Endothelial cell of umbilical vein (primary cell): ENCODE measurements at regions of chr5 and their contacts with region 1.

Region 1: GRCh38 chr5:146516151-146516475 is at the start of gene GPR151:
- DNase-seq: no peak
- H3K4me3 ChIP-seq: no peak within 1 kb of the TSS
- H3K27ac ChIP-seq: no peak within 1 kb of the TSS
- H3K4me1 ChIP-seq: no peaks in the 10 kb centered on the region
- H3K27me3 ChIP-seq: peaks cover 0 to 2% of the 10 kb centered on the region in 2 experiments
- CTCF ChIP-seq: no peak
- POLR2A ChIP-seq: no peak
- total RNA-seq, gene GPR151: not detected in 2 replicates

Region 2: DNA sequence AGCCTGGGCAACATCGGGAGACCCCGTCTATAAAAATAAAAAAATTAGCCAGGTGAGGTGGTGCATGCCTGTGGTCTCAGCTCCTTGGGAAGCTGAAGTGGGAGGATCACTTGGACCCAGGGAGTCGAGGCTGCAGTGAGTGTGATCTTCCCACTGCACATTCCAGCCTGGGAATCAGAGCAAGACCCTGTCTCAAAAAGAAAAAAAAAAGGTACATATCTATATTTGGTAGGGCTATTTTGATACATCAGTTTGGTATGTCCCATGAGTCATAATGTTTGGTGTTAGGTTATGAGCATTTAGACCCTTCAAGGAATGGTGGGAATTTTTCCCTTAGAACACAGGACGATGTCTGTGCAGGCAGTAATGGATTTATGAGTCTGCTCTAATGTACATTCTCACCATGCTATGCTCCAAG is 232.8 kb before region 1 on chr5:
- CTCF ChIA-PET with region 1: no interaction called
- POLR2A ChIA-PET with region 1: no interaction called
- dilution Hi-C with region 1: no loop called
- intact Hi-C with region 1: loop called (anchors 10 kb)
- DNase-seq: peak; percentile 73
- H3K4me3 ChIP-seq: no peak overlapping the region
- H3K27ac ChIP-seq: peak overlapping the region; percentile 58
- H3K4me1 ChIP-seq: peaks cover 16% of the 10 kb centered on the region
- H3K27me3 ChIP-seq: no peaks in the 10 kb centered on the region
- CTCF ChIP-seq: no peak
- POLR2A ChIP-seq: no peak

Region 3: DNA sequence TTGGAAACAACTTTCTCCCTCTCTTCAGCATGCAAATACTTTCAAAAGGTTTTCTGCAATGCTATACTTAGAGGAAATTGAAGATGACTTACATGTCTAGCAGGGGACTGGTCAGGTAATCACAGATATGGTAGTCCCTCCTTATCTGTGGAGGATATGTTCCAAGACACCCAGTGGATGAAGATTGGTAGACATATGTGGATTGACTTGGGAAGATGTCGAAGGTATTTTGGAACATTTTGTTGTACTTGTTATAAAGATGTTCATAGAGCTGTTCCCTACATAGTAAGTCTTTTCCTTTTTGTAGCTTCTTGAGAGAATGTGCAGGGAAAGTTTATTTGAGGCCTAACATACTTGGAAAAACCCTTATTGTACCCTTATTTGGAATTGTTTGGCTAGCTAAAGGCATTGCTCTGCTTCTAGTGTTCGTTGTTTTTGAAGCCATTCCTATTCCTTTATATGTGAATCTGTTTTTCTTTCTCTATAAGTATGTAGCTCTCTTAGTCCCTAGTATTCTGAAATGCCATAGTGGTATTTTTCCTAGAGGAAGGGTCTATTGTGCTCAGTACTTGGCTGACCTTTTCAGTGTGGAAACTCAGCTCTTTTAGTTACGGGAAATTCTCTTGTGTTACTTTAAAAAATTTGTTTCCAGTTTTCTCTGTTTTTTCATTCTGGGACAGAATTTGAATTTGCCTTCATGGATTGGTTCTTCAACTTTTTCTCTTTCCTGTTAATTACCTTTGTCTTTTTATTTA is 25.8 kb before region 1 on chr5:
- CTCF ChIA-PET with region 1: no interaction called
- POLR2A ChIA-PET with region 1: no interaction called
- dilution Hi-C with region 1: no loop called
- intact Hi-C with region 1: no loop called
- DNase-seq: peak; percentile 31
- H3K4me3 ChIP-seq: no peak overlapping the region
- H3K27ac ChIP-seq: no peak overlapping the region
- H3K4me1 ChIP-seq: no peaks in the 10 kb centered on the region
- H3K27me3 ChIP-seq: no peaks in the 10 kb centered on the region
- CTCF ChIP-seq: no peak
- POLR2A ChIP-seq: no peak